CD4-positive, alpha-beta memory T cell (primary cell): ENCODE measurements at regions of chr2 and their contacts with region 1.

Region 1: GRCh38 chr2:226835796-226836547 is at the start of gene RHBDD1:
- DNase-seq: peak; percentile 93 to 95 (median 95)
- H3K4me3 ChIP-seq: peak within 1 kb of the TSS; percentile 64 to 94
- H3K4me3 Mint-ChIP-seq: peak within 1 kb of the TSS; percentile 91 to 99 (median 97)
- H3K27ac ChIP-seq: peak within 1 kb of the TSS; percentile 98
- H3K27ac Mint-ChIP-seq: peak within 1 kb of the TSS; percentile 97 to 100 (median 100)
- H3K4me1 ChIP-seq: peaks cover 63% of the 10 kb centered on the region
- H3K4me1 Mint-ChIP-seq: peaks cover 33 to 71% (median 50%) of the 10 kb centered on the region in 4 donors
- H3K27me3 ChIP-seq: no peaks in the 10 kb centered on the region
- H3K27me3 Mint-ChIP-seq: no peaks in the 10 kb centered on the region
- total RNA-seq, gene RHBDD1: 54.6 to 66.0 TPM

Region 2: DNA sequence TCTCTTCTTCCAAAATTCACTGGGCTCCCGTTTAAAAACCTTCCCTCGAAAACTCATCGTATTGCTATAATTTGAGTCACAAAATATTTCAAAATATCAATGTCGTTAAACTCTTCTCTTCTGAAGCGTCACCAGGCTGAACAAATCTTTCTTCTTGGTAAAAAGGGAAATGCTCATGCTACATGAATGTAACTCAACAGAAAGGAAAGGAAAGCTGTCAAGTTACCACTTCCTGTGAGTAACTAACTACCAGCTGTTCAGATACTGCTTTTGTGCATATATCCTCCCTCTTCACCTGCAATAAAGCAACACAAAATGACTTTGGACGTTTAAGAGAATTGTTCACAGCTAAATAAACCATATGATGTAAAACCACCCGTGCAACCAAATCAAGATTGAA is 1889.1 kb before region 1 on chr2:
- CTCF ChIA-PET with region 1: no interaction called
- POLR2A ChIA-PET with region 1: no interaction called
- intact Hi-C with region 1: loop called (anchors 10 kb)
- DNase-seq: peak; percentile 59 to 75 (median 66)
- H3K4me3 ChIP-seq: peak overlapping the region; percentile 59 to 64
- H3K4me3 Mint-ChIP-seq: peak overlapping the region; percentile 84 to 95 (median 92)
- H3K27ac ChIP-seq: peak overlapping the region; percentile 75
- H3K27ac Mint-ChIP-seq: peak overlapping the region; percentile 89 to 98 (median 94)
- H3K4me1 ChIP-seq: peaks cover 81% of the 10 kb centered on the region
- H3K4me1 Mint-ChIP-seq: peaks cover 55 to 85% (median 72%) of the 10 kb centered on the region in 4 donors
- H3K27me3 ChIP-seq: no peaks in the 10 kb centered on the region
- H3K27me3 Mint-ChIP-seq: no peaks in the 10 kb centered on the region

Region 3: DNA sequence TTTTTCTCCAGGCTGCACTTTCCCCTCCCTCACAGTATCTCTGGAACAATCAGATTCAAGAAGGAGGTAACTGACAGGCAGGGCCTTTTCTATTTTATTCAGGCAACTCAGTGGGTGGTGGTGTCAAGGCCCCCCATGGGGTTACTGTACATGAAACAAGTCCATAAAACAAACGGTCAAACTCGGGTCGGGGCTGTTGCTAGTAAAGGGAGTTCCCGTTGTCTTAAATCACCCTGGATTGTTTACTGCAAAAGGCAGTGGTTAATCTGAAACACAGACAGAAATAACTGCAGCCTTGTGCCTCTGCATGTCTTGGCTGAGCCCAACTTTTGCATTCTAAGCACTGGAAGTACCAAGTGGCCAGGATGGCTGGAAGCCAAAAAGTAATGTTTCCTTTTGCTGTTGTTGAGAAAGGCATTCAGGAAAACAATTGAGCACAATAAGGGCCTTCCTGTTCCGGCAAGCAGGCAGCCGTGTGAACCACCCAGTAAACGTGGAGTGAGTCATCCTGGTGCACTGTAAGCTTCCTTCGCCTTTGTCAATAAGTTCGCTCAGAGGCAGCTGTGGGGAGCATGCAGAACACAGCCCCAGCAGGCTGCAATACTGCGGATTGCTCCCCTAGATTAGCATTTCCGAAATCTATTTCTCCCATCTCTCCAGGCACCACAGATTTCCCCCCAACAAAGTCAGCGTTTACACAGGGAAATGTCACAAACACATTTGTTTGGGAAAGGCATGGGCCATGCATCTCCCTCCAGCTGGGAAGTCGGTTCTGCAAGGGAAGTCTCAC is 185.9 kb before region 1 on chr2:
- CTCF ChIA-PET with region 1: no interaction called
- POLR2A ChIA-PET with region 1: no interaction called
- intact Hi-C with region 1: loop called (anchors 5 kb)
- DNase-seq: peak; percentile 39 to 68 (median 48)
- H3K4me3 ChIP-seq: no peak overlapping the region
- H3K4me3 Mint-ChIP-seq: peak overlapping the region; percentile 11 to 79 (median 52)
- H3K27ac ChIP-seq: no peak overlapping the region
- H3K27ac Mint-ChIP-seq: peak overlapping the region; percentile 61 to 93 (median 84)
- H3K4me1 ChIP-seq: peaks cover 30% of the 10 kb centered on the region
- H3K4me1 Mint-ChIP-seq: peaks cover 21 to 40% (median 31%) of the 10 kb centered on the region in 4 donors
- H3K27me3 ChIP-seq: no peaks in the 10 kb centered on the region
- H3K27me3 Mint-ChIP-seq: no peaks in the 10 kb centered on the region

Region 4: DNA sequence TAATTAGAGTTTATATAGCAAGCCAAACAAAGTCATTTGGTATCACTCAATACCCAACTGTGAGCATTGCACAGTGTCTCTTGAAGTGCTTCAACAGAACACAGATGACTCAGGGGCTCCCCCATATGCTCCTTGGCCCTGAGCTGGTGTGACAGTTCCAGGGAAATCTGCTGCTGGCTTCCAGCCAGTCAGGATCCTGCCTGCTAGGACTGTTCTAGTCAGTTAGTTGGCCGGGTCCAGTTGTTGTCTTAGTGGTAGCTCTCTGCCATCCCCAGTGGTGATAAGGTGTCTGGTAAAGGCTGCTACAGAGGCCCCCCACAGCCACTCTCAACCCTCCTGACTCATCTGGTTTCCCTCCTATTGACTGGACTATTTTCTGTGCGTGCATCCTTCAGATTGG is 136.7 kb before region 1 on chr2:
- CTCF ChIA-PET with region 1: no interaction called
- POLR2A ChIA-PET with region 1: no interaction called
- intact Hi-C with region 1: no loop called
- DNase-seq: no peak
- H3K4me3 ChIP-seq: no peak overlapping the region
- H3K4me3 Mint-ChIP-seq: no peak overlapping the region
- H3K27ac ChIP-seq: no peak overlapping the region
- H3K27ac Mint-ChIP-seq: no peak overlapping the region
- H3K4me1 ChIP-seq: no peaks in the 10 kb centered on the region
- H3K4me1 Mint-ChIP-seq: no peaks in the 10 kb centered on the region
- H3K27me3 ChIP-seq: no peaks in the 10 kb centered on the region
- H3K27me3 Mint-ChIP-seq: peaks cover 6 to 11% of the 10 kb centered on the region in 2 donors

Region 5: GRCh38 chr2:226791487-226792081 is 44.4 kb before region 1 on chr2:
- CTCF ChIA-PET with region 1: interaction called, 5 read pairs
- POLR2A ChIA-PET with region 1: interaction called, 19 read pairs
- intact Hi-C with region 1: loop called (anchors 1 kb)
- DNase-seq: peak; percentile 90 to 96 (median 93)
- H3K4me3 ChIP-seq: peak overlapping the region; percentile 42 to 58
- H3K4me3 Mint-ChIP-seq: peak overlapping the region; percentile 95 to 98 (median 96)
- H3K27ac ChIP-seq: peak overlapping the region; percentile 76
- H3K27ac Mint-ChIP-seq: peak overlapping the region; percentile 97 to 99 (median 99)
- H3K4me1 ChIP-seq: peaks cover 19% of the 10 kb centered on the region
- H3K4me1 Mint-ChIP-seq: peaks cover 18 to 41% (median 30%) of the 10 kb centered on the region in 4 donors
- H3K27me3 ChIP-seq: no peaks in the 10 kb centered on the region
- H3K27me3 Mint-ChIP-seq: no peaks in the 10 kb centered on the region

Region 6: DNA sequence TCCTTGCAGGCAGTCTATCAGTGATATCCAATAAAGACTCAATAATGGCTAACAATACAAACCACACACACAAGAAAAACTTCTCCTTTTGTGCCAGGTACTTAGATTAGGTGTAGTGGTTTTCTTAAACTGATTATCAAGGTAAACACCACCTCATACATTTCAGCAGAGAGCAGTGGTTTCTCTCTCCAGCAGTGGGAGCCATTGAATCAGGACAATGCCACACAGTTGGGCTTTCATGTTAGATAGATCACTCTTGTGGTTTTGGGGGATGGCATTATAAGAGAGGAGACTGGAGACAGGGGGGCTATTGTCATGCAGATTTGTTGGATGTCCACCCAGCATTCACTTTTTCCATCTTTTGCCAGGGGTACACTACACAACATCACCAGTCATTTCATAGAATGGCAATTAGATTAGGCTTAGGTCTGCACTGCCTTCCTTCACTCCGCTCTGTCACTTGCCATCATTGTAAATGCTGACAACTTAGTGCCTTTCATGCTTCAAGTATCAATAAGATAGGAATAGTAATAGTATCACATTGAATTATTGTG is 22.7 kb before region 1 on chr2:
- CTCF ChIA-PET with region 1: no interaction called
- POLR2A ChIA-PET with region 1: no interaction called
- intact Hi-C with region 1: no loop called
- DNase-seq: no peak
- H3K4me3 ChIP-seq: no peak overlapping the region
- H3K4me3 Mint-ChIP-seq: no peak overlapping the region
- H3K27ac ChIP-seq: no peak overlapping the region
- H3K27ac Mint-ChIP-seq: no peak overlapping the region
- H3K4me1 ChIP-seq: no peaks in the 10 kb centered on the region
- H3K4me1 Mint-ChIP-seq: no peaks in the 10 kb centered on the region
- H3K27me3 ChIP-seq: no peaks in the 10 kb centered on the region
- H3K27me3 Mint-ChIP-seq: peaks cover 19 to 32% of the 10 kb centered on the region in 2 donors

Region 7: DNA sequence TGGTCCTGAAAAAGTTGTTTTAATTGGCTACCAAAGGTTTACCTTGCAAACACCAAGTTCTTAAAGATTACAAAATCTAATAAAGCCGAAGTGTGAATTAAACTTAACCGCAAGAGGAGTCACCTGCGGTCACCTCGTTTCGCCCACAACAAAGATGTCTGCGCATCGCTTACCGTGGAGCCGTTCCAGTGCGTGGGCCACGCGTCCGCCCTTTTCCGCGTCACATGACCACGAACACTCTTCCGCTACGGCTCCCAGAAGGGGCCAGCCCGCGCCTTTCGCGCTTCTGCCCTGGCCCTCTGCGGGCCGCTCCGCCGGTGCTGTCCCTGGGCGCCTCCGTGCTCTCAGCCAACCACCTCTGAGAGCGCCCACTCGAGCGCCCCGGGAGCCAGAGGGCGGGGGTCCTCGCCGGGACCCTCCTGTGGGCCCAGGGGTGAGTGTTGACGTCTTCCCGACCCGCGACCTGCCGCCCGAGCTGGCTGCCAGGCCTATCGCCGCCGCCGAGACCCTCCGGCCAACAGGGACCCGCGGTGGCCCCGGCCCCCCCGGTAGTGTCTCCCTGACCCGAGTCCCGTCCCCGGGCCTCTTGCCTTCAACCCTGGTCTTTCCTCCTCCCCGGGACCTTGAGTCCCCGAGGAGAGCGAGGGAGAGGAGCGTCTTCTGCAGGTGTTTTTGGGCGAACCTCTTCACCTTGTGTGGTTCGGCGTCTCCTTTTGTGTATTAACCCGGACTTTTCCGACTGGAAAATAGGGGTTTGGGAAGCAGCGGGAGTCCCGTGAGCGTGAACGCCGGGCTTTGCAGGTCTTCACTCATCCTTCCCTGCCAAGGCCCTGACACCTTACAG is 489.2 kb after region 1 on chr2 and contains the start of gene MFF:
- CTCF ChIA-PET with region 1: no interaction called
- POLR2A ChIA-PET with region 1: no interaction called
- intact Hi-C with region 1: loop called (anchors 1 kb)
- DNase-seq: peak; percentile 92 to 96 (median 93)
- H3K4me3 ChIP-seq: peak within 1 kb of the TSS; percentile 85 to 91
- H3K4me3 Mint-ChIP-seq: peak within 1 kb of the TSS; percentile 95 to 97 (median 96)
- H3K27ac ChIP-seq: peak within 1 kb of the TSS; percentile 84
- H3K27ac Mint-ChIP-seq: peak within 1 kb of the TSS; percentile 95 to 98 (median 96)
- H3K4me1 ChIP-seq: peaks cover 30% of the 10 kb centered on the region
- H3K4me1 Mint-ChIP-seq: peaks cover 21 to 59% (median 36%) of the 10 kb centered on the region in 4 donors
- H3K27me3 ChIP-seq: no peaks in the 10 kb centered on the region
- H3K27me3 Mint-ChIP-seq: no peaks in the 10 kb centered on the region
- total RNA-seq, gene MFF: 58.0 to 64.3 TPM

Region 8: GRCh38 chr2:227471924-227472264 is 635.9 kb after region 1 on chr2 and contains the start of gene AGFG1:
- CTCF ChIA-PET with region 1: no interaction called
- POLR2A ChIA-PET with region 1: no interaction called
- intact Hi-C with region 1: loop called (anchors 10 kb)
- DNase-seq: peak; percentile 79 to 86 (median 82)
- H3K4me3 ChIP-seq: peak within 1 kb of the TSS in 1 of 2 donors; percentile 65
- H3K4me3 Mint-ChIP-seq: peak within 1 kb of the TSS; percentile 88 to 97 (median 93)
- H3K27ac ChIP-seq: peak within 1 kb of the TSS; percentile 73
- H3K27ac Mint-ChIP-seq: peak within 1 kb of the TSS; percentile 83 to 97 (median 89)
- H3K4me1 ChIP-seq: peaks cover 51% of the 10 kb centered on the region
- H3K4me1 Mint-ChIP-seq: peaks cover 31 to 51% (median 43%) of the 10 kb centered on the region in 4 donors
- H3K27me3 ChIP-seq: no peaks in the 10 kb centered on the region
- H3K27me3 Mint-ChIP-seq: no peaks in the 10 kb centered on the region
- total RNA-seq, gene AGFG1: 56.5 to 62.4 TPM